MCF 10A (cell line): ENCODE measurements at regions of chr6 and their contacts with region 1.

Region 1: GRCh38 chr6:110039364-110039980 is 61.4 kb downstream of the GPR6 start:
- DNase-seq: peak; percentile 90
- H3K4me3 Mint-ChIP-seq: peak overlapping the region; percentile 68
- H3K27ac Mint-ChIP-seq: peak overlapping the region; percentile 22
- H3K4me1 Mint-ChIP-seq: peaks cover 15% of the 10 kb centered on the region
- H3K27me3 Mint-ChIP-seq: no peaks in the 10 kb centered on the region
- CTCF ChIP-seq: peak; percentile 85

Region 2: GRCh38 chr6:109690737-109691621 is 348.5 kb before region 1 on chr6 and contains the starts of genes AK9 and FIG4:
- CTCF ChIA-PET with region 1: interaction called, 337 read pairs
- POLR2A ChIA-PET with region 1: interaction called, 4 read pairs
- intact Hi-C with region 1: no loop called
- DNase-seq: peak; percentile 96
- H3K4me3 Mint-ChIP-seq: peak within 1 kb of the TSS; percentile 91
- H3K27ac Mint-ChIP-seq: peak within 1 kb of the TSS; percentile 96
- H3K4me1 Mint-ChIP-seq: peaks cover 12% of the 10 kb centered on the region
- H3K27me3 Mint-ChIP-seq: no peaks in the 10 kb centered on the region
- CTCF ChIP-seq: peak; percentile 18
- total RNA-seq, gene AK9: 4.7 and 7.5 TPM in 2 replicates
- total RNA-seq, gene FIG4: 7.9 and 9.5 TPM in 2 replicates

Region 3: DNA sequence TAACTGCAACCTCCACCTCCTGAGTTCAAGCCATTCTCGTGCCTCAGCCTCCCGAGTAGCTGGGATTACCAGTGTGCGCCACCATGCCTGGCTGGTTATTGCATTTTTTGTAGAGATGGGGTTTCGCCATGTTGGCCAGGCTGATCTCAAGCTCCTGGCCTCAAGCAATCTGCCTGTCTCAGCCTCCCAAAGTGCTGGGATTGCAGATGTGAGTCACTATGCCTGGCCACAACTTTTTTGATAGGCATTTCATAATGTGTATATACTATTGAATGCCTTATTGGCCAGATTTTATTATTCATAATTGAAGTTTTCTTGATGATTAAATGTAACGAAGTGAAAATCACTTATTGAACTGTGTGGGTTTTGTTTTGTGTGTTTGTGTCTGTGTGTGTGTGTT is 320.5 kb before region 1 on chr6:
- CTCF ChIA-PET with region 1: interaction called, 113 read pairs
- POLR2A ChIA-PET with region 1: no interaction called
- intact Hi-C with region 1: no loop called
- DNase-seq: peak; percentile 38
- H3K4me3 Mint-ChIP-seq: no peak overlapping the region
- H3K27ac Mint-ChIP-seq: no peak overlapping the region
- H3K4me1 Mint-ChIP-seq: peaks cover 3% of the 10 kb centered on the region
- H3K27me3 Mint-ChIP-seq: no peaks in the 10 kb centered on the region
- CTCF ChIP-seq: no peak

Region 4: DNA sequence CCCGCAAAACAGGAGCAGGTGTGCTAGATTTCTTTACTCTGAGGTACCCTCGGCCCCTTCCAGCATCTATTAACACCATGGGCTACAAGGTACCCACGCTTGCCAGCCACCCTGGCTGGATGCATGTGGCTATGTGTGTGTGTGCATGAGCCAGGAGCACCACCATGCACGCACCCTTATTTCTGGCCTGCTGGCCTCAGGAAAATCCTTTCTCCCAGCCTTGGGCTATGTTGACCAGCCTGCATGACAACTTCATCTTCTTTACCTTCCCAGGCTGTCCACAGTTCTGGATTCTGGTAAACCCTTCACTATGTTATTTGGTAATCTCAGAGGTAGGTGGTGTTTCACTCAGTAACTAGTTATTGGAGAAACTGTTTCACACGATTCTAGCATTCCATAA is 21.0 kb before region 1 on chr6:
- CTCF ChIA-PET with region 1: interaction called, 11 read pairs
- POLR2A ChIA-PET with region 1: no interaction called
- intact Hi-C with region 1: no loop called
- DNase-seq: no peak
- H3K4me3 Mint-ChIP-seq: no peak overlapping the region
- H3K27ac Mint-ChIP-seq: no peak overlapping the region
- H3K4me1 Mint-ChIP-seq: no peaks in the 10 kb centered on the region
- H3K27me3 Mint-ChIP-seq: peaks cover 29% of the 10 kb centered on the region
- CTCF ChIP-seq: no peak

Region 5: GRCh38 chr6:110064744-110065524 is 25.5 kb after region 1 on chr6:
- CTCF ChIA-PET with region 1: interaction called, 12 read pairs
- POLR2A ChIA-PET with region 1: no interaction called
- intact Hi-C with region 1: no loop called
- DNase-seq: no peak
- H3K4me3 Mint-ChIP-seq: no peak overlapping the region
- H3K27ac Mint-ChIP-seq: no peak overlapping the region
- H3K4me1 Mint-ChIP-seq: peaks cover 14% of the 10 kb centered on the region
- H3K27me3 Mint-ChIP-seq: peaks cover 10% of the 10 kb centered on the region
- CTCF ChIP-seq: no peak

Region 6: GRCh38 chr6:110179401-110180227 is 140.1 kb after region 1 on chr6 and contains the start of gene WASF1:
- CTCF ChIA-PET with region 1: interaction called, 18 read pairs
- POLR2A ChIA-PET with region 1: interaction called, 6 read pairs
- intact Hi-C with region 1: no loop called
- DNase-seq: peak; percentile 99
- H3K4me3 Mint-ChIP-seq: no peak within 1 kb of the TSS
- H3K27ac Mint-ChIP-seq: peak within 1 kb of the TSS; percentile 40
- H3K4me1 Mint-ChIP-seq: peaks cover 16% of the 10 kb centered on the region
- H3K27me3 Mint-ChIP-seq: no peaks in the 10 kb centered on the region
- CTCF ChIP-seq: no peak
- total RNA-seq, gene WASF1: 50.5 and 55.7 TPM in 2 replicates

Region 7: DNA sequence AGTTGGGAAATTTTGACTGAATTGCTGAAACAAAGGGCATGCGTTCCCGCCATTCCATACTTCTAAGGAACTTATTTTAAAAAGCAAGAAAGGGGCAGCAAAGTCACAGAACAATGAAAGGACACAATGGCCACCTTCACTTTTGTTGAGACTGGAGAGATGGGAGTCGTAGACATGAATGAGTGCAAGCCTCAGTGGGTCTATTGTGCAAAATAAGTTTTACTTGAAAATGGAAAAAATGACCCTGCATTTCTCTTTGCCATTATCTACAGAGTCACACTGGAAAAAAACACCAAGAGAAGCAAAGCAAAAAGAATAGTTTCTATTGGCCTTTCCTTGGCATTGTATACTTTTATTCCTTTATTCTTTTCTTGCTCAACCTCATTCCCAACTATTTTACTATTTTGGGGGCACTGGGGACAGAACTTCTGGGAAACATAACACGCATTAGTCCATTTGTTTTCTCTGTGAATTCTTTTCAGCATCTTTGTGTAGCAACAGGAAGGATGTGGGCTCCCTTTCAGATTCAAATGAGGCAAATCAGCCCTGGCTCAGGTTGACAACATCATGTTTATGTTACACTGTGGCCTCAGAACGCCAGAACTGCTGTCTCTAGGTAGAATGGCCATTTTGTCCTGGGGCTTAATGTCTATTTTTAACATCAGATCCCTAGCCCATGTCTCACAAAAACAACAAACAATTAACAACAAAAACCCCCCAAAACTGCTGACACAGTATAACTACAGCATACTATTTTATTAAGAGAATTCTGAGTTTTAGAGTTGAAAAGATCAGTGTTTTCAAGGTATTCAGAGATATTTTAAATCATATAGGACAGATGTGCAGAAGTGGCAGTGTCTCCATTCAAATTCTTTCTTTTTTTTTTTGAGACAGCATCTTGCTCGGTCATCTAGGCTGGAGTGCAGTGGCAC is 1711.5 kb after region 1 on chr6:
- CTCF ChIA-PET with region 1: no interaction called
- POLR2A ChIA-PET with region 1: no interaction called
- intact Hi-C with region 1: no loop called
- DNase-seq: no peak
- H3K4me3 Mint-ChIP-seq: no peak overlapping the region
- H3K27ac Mint-ChIP-seq: no peak overlapping the region
- H3K4me1 Mint-ChIP-seq: no peaks in the 10 kb centered on the region
- H3K27me3 Mint-ChIP-seq: no peaks in the 10 kb centered on the region
- CTCF ChIP-seq: no peak